ENCODE measurements at regions of chr17 and their contacts with region 1.

Region 1: DNA sequence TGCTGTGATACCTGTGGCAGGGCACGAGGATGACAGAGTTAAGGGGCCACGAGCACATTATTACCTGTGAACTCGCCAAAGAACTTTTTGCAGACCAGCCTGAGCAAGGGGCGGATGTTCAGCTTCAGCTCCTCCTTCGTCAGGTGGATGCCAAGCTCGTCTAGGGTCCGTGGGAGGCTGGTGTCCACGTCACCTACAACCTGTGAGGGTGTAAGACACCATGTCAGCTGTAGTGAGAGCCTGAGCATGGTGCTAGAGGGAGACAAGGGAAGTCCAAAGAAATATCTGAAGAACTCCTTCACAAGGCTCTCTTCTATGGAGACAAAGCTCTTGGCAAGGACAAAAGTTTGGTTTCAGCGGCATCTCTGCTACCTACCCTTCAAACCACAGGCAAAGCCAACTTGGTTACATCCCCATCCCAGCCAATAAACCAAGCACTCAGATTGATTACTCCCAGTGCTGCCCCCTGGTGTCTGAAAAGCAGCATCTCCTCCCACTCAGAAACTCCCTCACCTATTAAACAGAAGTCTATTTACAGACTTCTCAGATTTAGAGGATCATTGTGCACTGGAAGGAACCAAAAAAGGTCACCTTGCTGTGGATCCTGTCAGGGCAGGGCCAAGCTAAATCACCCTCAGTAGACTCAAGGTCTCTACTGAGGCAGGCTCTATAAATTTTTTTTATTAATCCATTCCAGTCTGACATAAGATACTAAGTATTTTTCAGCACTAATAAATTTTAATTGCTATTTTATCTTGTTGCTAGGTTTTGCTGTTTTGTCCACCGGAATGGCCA is 17.4 kb downstream of the HIGD1B start:
- DNase-seq: peak; percentile 49 to 70
- ATAC-seq: peak; percentile 83

Region 2: GRCh38 chr17:44775136-44775837 is 89.8 kb before region 1 on chr17:
- intact Hi-C with region 1: loop called (anchors 5 kb)
- DNase-seq: peak; percentile 99
- ATAC-seq: peak; percentile 94

Measured in left colon (tissue), 2 donors.